ENCODE measurements at regions of chr17 and their contacts with region 1.

Region 1: GRCh38 chr17:43576563-43577229 is 30.6 kb upstream of the ETV4 start:
- DNase-seq: peak; percentile 33 to 65 (median 52)
- ATAC-seq: peak; percentile 79
- H3K4me3 ChIP-seq: no peak overlapping the region
- H3K4me3 Mint-ChIP-seq: no peak overlapping the region
- H3K27ac ChIP-seq: no peak overlapping the region
- H3K27ac Mint-ChIP-seq: peak overlapping the region in 2 of 9 donors; percentile 23 to 74
- H3K4me1 ChIP-seq: peaks cover 5 to 6% of the 10 kb centered on the region in 2 donors
- H3K4me1 Mint-ChIP-seq: peaks cover 8 to 22% (median 14%) of the 10 kb centered on the region in 7 donors
- H3K27me3 ChIP-seq: no peaks in the 10 kb centered on the region
- H3K27me3 Mint-ChIP-seq: peaks cover 0 to 7% (median 0%) of the 10 kb centered on the region in 5 donors

Region 2: GRCh38 chr17:43314611-43315011 is 262.1 kb before region 1 on chr17:
- CTCF ChIA-PET with region 1: no interaction called
- POLR2A ChIA-PET with region 1: no interaction called
- intact Hi-C with region 1: no loop called
- DNase-seq: peak in 1 of 9 donors; percentile 23
- ATAC-seq: no peak
- H3K4me3 ChIP-seq: no peak overlapping the region
- H3K4me3 Mint-ChIP-seq: peak overlapping the region in 2 of 10 donors; percentile 58 to 59
- H3K27ac ChIP-seq: no peak overlapping the region
- H3K27ac Mint-ChIP-seq: peak overlapping the region in 1 of 9 donors; percentile 67
- H3K4me1 ChIP-seq: no peaks in the 10 kb centered on the region
- H3K4me1 Mint-ChIP-seq: peaks cover 5 to 11% (median 7%) of the 10 kb centered on the region in 7 donors
- H3K27me3 ChIP-seq: no peaks in the 10 kb centered on the region
- H3K27me3 Mint-ChIP-seq: no peaks in the 10 kb centered on the region

Region 3: DNA sequence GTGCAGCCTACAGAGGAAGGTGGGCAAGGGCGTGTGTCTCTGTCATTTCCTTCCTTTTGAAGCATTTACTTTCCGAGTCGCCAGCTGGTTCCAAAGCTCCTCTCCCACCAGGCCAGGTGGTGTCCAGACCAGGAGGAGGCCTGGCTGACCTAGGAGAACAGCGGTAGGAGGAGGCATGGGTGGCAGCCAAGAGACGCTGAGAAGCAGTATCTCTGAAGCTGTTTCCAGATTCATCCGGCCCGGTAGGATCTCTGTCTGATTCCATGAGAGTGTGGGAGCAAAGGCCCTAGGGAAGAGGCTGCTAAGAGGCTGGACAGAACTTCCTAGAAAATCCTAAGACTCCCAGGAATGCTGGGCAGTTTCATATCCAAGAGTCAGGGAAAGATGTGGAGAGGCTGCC is 64.7 kb after region 1 on chr17:
- CTCF ChIA-PET with region 1: interaction called, 5 read pairs
- POLR2A ChIA-PET with region 1: no interaction called
- intact Hi-C with region 1: loop called in 1 of 2 experiments (anchors 2 kb)
- DNase-seq: no peak
- ATAC-seq: no peak
- H3K4me3 ChIP-seq: no peak overlapping the region
- H3K4me3 Mint-ChIP-seq: peak overlapping the region in 8 of 10 donors; percentile 4 to 74 (median 70)
- H3K27ac ChIP-seq: peak overlapping the region; percentile 35
- H3K27ac Mint-ChIP-seq: peak overlapping the region in 8 of 9 donors; percentile 10 to 91 (median 80)
- H3K4me1 ChIP-seq: no peaks in the 10 kb centered on the region
- H3K4me1 Mint-ChIP-seq: peaks cover 0 to 24% (median 13%) of the 10 kb centered on the region in 7 donors
- H3K27me3 ChIP-seq: no peaks in the 10 kb centered on the region
- H3K27me3 Mint-ChIP-seq: peaks cover 0 to 34% (median 9%) of the 10 kb centered on the region in 5 donors

Region 4: GRCh38 chr17:43673516-43674323 is 97.0 kb after region 1 on chr17:
- CTCF ChIA-PET with region 1: no interaction called
- POLR2A ChIA-PET with region 1: interaction called, 5 read pairs
- intact Hi-C with region 1: loop called (anchors 1 kb)
- DNase-seq: peak; percentile 31 to 71 (median 59)
- ATAC-seq: peak; percentile 74
- H3K4me3 ChIP-seq: no peak overlapping the region
- H3K4me3 Mint-ChIP-seq: no peak overlapping the region
- H3K27ac ChIP-seq: no peak overlapping the region
- H3K27ac Mint-ChIP-seq: peak overlapping the region in 2 of 9 donors; percentile 38 to 40
- H3K4me1 ChIP-seq: no peaks in the 10 kb centered on the region
- H3K4me1 Mint-ChIP-seq: peaks cover 8 to 32% (median 15%) of the 10 kb centered on the region in 7 donors
- H3K27me3 ChIP-seq: no peaks in the 10 kb centered on the region
- H3K27me3 Mint-ChIP-seq: peaks cover 0 to 9% (median 3%) of the 10 kb centered on the region in 5 donors

Measured in naive thymus-derived CD4-positive, alpha-beta T cell (primary cell).